ENCODE measurements at regions of chr3 and their contacts with region 1.

Region 1: DNA sequence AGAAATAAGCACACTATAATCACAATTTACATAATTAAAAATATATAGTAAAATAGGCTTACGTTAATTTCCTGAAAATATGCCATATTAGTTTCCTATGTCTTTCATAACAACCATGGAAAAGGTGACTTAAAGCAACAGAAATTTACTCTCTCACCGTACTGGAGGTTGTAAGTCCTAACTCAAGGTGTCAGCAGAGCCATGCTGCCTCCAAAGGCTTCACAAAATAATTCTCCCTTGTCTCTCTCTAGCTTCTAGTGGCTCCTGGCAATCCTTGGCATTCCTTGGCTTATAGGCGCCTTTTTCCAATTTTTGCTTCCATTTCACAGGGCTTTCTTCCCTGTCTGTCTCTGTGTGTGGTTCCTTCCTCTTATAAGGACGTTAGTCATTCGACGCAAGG is 7.6 kb downstream of the SI start:
- DNase-seq: no peak
- ATAC-seq: no peak
- H3K4me3 ChIP-seq: no peak overlapping the region
- H3K27ac ChIP-seq: no peak overlapping the region
- H3K4me1 ChIP-seq: no peaks in the 10 kb centered on the region
- H3K27me3 ChIP-seq: no peaks in the 10 kb centered on the region
- CTCF ChIP-seq: no peak

Region 2: DNA sequence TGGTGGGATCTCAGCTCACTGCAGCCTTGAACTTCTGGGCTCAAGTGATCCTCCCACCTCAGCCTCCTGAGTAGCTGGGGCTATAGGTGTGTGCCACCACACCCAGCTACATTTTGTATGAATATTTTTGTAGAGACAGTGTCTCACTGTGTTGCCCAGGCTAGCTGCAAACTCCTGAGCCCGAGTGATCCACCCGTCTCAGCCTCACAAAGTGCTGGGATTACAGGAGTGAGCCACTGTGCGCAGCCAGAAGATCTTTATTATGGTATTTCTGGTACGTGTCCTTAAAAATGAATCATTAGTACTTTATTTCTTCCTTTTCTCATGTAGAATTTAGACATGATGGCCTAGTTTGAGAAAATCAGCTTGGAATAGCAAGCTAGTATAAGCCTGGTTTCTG is 613.3 kb after region 1 on chr3:
- intact Hi-C with region 1: loop called in 1 of 10 experiments (anchors 5 kb)
- DNase-seq: no peak
- ATAC-seq: no peak
- H3K4me3 ChIP-seq: no peak overlapping the region
- H3K27ac ChIP-seq: no peak overlapping the region
- H3K4me1 ChIP-seq: no peaks in the 10 kb centered on the region
- H3K27me3 ChIP-seq: no peaks in the 10 kb centered on the region
- CTCF ChIP-seq: no peak